ENCODE measurements at regions of chr22 and their contacts with region 1.

Region 1: DNA sequence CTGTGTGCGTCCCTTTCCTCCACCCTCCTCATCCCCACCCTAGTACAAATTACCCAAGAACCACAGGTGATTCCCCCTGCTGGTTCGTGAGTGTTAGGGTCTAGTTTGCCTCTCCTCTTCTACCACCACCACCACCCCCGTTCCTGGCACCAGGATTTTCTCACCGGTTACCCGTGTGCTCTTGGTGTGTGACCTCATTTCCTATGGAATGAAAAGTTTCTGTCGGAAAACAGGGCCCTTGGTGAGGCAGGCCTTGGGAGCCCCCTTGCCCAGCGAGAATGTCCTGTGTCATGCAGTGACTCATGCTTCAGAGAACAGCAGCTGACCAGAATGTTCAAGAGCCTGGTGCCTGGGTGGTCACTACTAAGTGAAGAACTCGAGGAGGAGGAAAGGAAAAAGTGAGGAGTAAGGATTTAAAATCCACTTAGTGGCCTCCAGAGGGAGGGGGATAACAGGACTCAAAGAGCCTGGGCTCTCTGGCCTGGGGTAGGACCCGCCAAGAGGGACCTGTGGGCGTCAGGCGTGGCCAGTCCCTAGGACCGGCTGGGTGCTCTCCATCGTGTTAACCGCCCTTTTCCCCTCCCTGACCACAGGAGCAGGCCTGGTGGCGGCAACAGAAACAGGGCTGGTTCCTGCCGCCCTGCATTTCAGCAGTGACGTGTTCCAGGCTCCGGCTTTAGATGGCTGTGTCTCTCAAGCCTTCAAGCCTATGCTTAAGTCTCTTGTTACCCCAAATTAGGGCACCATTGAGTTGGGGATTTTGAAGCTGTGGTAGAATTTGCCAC is 30.2 kb downstream of the C22orf31 start:
- DNase-seq: peak; percentile 97
- ATAC-seq: peak; percentile 75
- H3K4me3 ChIP-seq: peak overlapping the region; percentile 45 to 57
- H3K27ac ChIP-seq: peak overlapping the region; percentile 97
- H3K4me1 ChIP-seq: peaks cover 52 to 64% of the 10 kb centered on the region in 2 experiments
- H3K27me3 ChIP-seq: no peaks in the 10 kb centered on the region
- CTCF ChIP-seq: peak in 2 of 3 experiments; percentile 1 to 25; a peak in 1 of 6 replicates
- POLR2A ChIP-seq: no peak
- RAD21 ChIP-seq: peak; percentile 2; the same call in 1 of the 2 replicates

Region 2: GRCh38 chr22:28882878-28883656 is 148.4 kb before region 1 on chr22 and contains the start of gene ZNRF3:
- CTCF ChIA-PET with region 1: interaction called, 3 read pairs
- POLR2A ChIA-PET with region 1: interaction called, 3 read pairs
- RAD21 ChIA-PET with region 1: interaction called in 1 of 2 experiments, 5 read pairs
- intact Hi-C with region 1: loop called (anchors 1 kb)
- DNase-seq: peak; percentile 83
- ATAC-seq: peak; percentile 85
- H3K4me3 ChIP-seq: peak within 1 kb of the TSS; percentile 66 to 80
- H3K27ac ChIP-seq: peak within 1 kb of the TSS; percentile 77
- H3K4me1 ChIP-seq: peaks cover 19 to 24% of the 10 kb centered on the region in 2 experiments
- H3K27me3 ChIP-seq: no peaks in the 10 kb centered on the region
- CTCF ChIP-seq: no peak
- POLR2A ChIP-seq: peak; percentile 29
- RAD21 ChIP-seq: no peak
- total RNA-seq, gene ZNRF3: 12.2 TPM

Region 3: GRCh38 chr22:28917747-28918549 is 113.5 kb before region 1 on chr22:
- CTCF ChIA-PET with region 1: interaction called, 4 read pairs
- POLR2A ChIA-PET with region 1: interaction called, 16 read pairs
- RAD21 ChIA-PET with region 1: interaction called in 1 of 2 experiments, 12 read pairs
- intact Hi-C with region 1: loop called (anchors 1 kb)
- DNase-seq: peak; percentile 74
- ATAC-seq: peak; percentile 78
- H3K4me3 ChIP-seq: peak overlapping the region in 1 of 2 experiments; percentile 31; a peak in 2 of 4 replicates
- H3K27ac ChIP-seq: peak overlapping the region; percentile 56
- H3K4me1 ChIP-seq: peaks cover 75 to 87% of the 10 kb centered on the region in 2 experiments
- H3K27me3 ChIP-seq: no peaks in the 10 kb centered on the region
- CTCF ChIP-seq: no peak
- POLR2A ChIP-seq: no peak
- RAD21 ChIP-seq: no peak

Region 4: DNA sequence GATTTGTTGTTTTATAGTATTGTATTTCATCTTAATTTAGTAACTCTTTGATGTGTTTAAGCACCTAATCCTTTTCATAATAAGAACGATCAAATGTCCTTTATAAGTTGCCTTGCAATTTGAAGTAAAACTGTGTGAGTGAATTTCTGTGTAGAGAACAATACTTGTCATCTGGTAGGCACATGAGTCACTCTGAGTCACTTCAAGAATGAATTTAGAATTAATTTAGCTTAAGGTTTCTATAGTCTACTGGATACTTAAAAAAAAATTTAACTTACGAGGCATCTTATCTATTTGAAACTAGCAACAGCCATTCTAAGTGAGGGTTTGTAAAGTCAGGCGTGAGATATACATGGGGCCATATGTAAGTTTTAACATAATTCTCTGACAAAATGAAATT is 54.8 kb before region 1 on chr22:
- CTCF ChIA-PET with region 1: no interaction called
- POLR2A ChIA-PET with region 1: no interaction called
- RAD21 ChIA-PET with region 1: no interaction called
- intact Hi-C with region 1: loop called (anchors 2 kb)
- DNase-seq: peak; percentile 56
- ATAC-seq: peak; percentile 36; the same call in 1 of the 2 replicates
- H3K4me3 ChIP-seq: peak overlapping the region; percentile 26 to 45
- H3K27ac ChIP-seq: peak overlapping the region; percentile 72
- H3K4me1 ChIP-seq: peaks cover 57 to 73% of the 10 kb centered on the region in 2 experiments
- H3K27me3 ChIP-seq: no peaks in the 10 kb centered on the region
- CTCF ChIP-seq: no peak
- POLR2A ChIP-seq: no peak
- RAD21 ChIP-seq: no peak